Left cardiac atrium (tissue), 4 donors: ENCODE measurements at regions of chr9 and their contacts with region 1.

Region 1: DNA sequence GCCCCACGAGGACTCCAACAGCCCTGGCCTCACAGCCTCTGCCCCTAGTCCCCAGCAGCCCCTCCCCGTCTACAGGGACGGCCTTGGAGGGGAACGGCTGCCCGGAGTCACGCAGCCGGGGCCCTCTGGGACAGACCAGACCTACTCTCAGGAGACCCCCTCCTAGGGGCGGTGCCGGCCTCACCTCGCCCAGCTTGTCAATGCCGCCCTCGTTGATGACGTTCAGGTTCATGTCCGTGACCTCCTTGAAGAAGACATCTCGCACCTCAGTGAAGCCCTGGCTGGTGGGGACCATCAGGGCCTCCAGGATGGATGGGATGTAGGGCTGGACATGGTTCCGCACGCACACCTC is 58.6 kb downstream of the LRSAM1 start:
- DNase-seq: no peak
- ATAC-seq: peak; percentile 4 to 35

Region 2: GRCh38 chr9:126448865-126449537 is 1060.9 kb before region 1 on chr9:
- intact Hi-C with region 1: no loop called
- DNase-seq: no peak
- ATAC-seq: no peak

Region 3: DNA sequence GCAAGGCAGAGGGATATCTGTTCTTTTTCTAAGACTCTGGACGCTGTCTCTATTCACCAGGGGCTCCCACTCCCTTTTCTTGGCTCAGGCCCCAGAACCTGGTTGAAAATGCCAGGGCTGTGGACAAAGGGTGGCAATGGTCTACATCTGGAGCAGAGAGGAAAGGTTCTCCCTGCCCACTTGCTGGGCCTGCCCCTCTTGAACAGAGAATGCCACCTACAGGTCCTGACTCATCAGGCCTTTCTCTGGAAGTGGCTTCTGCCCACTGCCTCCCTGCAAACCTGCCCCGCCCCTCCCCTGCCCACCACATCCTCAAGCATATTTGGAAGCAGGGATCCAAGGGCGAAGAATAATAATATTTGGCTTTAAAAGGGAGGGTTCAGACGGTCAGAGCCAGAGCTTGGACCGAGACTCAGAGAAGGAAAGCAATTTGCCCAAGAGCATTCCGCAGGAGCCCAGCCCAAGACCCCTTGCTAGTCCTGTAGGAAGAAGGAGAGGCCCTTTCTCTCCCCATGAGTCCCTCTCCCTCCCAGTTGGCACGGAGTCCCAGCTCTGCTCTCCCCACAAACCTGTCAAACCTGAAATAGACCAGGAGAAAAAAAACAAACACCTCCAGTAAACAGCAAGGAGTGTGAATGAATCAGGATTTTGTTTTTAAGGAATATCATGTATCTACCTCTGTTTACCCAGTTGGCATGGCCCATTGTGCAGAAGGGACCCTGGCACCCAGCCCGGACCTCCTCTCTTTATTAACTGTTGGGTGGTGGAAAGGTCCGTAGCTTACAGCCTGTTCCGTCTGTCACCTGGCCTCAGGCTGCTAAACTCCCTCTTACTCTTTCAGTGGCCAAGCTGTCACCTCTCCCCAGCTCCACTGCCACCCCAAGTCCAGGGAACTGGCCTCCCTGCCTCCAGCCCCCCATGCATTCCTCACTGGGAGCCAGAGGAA is 64.4 kb after region 1 on chr9:
- intact Hi-C with region 1: loop called in 1 of 2 experiments (anchors 5 kb)
- DNase-seq: peak; percentile 43
- ATAC-seq: peak in 1 of 2 donors; percentile 10